ENCODE measurements at regions of chr2 and their contacts with region 1.

Region 1: GRCh38 chr2:26846328-26847306 is 1.3 kb upstream of the DPYSL5 start:
- DNase-seq: peak; percentile 67
- H3K4me3 Mint-ChIP-seq: peak overlapping the region; percentile 46
- H3K27ac Mint-ChIP-seq: no peak overlapping the region
- H3K4me1 Mint-ChIP-seq: peaks cover 11% of the 10 kb centered on the region
- H3K27me3 Mint-ChIP-seq: peaks cover 73% of the 10 kb centered on the region

Region 2: DNA sequence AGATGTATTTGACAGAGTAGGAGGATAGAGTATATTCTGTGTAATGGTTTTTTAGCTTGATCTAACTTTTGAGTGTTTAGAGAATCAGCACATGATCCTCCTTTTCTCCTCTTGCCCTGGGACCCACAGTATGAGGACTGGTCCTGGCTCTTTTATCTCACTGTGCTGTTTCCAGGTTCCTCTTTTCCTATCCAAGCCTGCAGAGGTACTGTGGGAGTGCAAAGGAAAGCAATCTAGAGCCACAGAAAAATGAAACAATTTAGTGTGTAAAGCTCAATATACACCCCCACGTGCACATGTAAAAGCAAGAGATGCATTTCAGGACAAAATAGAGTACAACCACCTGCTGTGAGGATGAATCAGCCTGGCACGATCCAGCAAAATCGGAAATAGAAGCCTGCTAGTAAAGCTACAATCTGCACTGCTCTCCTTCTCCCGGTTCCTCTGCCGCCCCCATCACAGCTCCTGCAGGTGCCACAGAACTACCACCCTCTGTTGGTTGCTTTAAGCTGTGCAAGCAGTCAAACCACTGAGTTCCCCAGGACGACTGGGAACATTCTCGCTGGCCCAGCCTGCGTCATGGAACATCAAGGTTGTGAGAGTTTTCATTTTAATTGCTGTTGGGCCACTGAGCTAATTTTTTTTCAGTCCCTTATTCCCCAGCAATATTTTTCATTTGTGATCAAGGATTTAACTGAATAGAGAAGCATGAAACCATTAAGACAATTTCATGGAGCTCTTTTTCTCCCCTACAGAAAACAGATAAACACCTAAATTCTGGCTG is 76.0 kb after region 1 on chr2:
- CTCF ChIA-PET with region 1: interaction called, 34 read pairs
- DNase-seq: peak; percentile 46
- H3K4me3 Mint-ChIP-seq: no peak overlapping the region
- H3K27ac Mint-ChIP-seq: no peak overlapping the region
- H3K4me1 Mint-ChIP-seq: no peaks in the 10 kb centered on the region
- H3K27me3 Mint-ChIP-seq: peaks cover 35% of the 10 kb centered on the region

Region 3: GRCh38 chr2:26942543-26943295 is 96.1 kb after region 1 on chr2:
- CTCF ChIA-PET with region 1: interaction called, 95 read pairs
- DNase-seq: peak; percentile 75
- H3K4me3 Mint-ChIP-seq: no peak overlapping the region
- H3K27ac Mint-ChIP-seq: no peak overlapping the region
- H3K4me1 Mint-ChIP-seq: no peaks in the 10 kb centered on the region
- H3K27me3 Mint-ChIP-seq: peaks cover 33% of the 10 kb centered on the region

Region 4: DNA sequence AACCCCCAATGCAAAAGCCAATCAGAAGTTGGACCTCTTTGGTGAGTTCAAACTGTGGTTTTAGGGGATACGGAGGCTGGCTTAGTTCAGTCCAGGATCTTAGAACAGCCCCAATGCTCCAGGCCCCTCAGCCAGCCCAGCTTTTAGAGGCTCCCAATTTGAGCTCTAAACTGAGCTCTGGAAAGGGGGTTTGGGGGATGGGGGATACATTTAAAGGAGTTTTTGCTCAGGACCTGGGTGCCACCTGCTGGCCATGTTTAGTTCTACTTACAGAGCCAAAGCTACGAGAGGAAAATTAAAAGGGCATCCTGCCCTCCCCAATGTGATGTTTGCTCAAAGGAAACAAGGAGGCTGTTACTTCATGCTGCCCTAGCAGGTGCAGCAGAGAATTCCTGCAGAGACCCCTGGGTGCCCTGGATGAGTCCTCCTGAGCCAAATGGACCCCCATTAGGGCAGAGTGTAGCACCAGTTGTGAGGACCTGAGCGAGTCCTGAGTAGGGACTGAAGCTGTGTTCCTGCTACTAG is 170.2 kb after region 1 on chr2:
- CTCF ChIA-PET with region 1: interaction called, 21 read pairs
- DNase-seq: peak; percentile 73
- H3K4me3 Mint-ChIP-seq: no peak overlapping the region
- H3K27ac Mint-ChIP-seq: no peak overlapping the region
- H3K4me1 Mint-ChIP-seq: peaks cover 9% of the 10 kb centered on the region
- H3K27me3 Mint-ChIP-seq: peaks cover 10% of the 10 kb centered on the region